ENCODE measurements at regions of chr14 and their contacts with region 1.

Region 1: GRCh38 chr14:49867831-49868723 is 15.5 kb upstream of the NEMF start:
- DNase-seq: peak; percentile 86 to 97 (median 89)
- H3K4me3 ChIP-seq: peak overlapping the region; percentile 27 to 87 (median 76)
- H3K27ac ChIP-seq: peak overlapping the region in 58 of 59 donors; percentile 45 to 96 (median 87)
- H3K27me3 ChIP-seq: no peaks in the 10 kb centered on the region
- CTCF ChIP-seq: peak in 26 of 56 donors; percentile 6 to 50 (median 22)

Region 2: DNA sequence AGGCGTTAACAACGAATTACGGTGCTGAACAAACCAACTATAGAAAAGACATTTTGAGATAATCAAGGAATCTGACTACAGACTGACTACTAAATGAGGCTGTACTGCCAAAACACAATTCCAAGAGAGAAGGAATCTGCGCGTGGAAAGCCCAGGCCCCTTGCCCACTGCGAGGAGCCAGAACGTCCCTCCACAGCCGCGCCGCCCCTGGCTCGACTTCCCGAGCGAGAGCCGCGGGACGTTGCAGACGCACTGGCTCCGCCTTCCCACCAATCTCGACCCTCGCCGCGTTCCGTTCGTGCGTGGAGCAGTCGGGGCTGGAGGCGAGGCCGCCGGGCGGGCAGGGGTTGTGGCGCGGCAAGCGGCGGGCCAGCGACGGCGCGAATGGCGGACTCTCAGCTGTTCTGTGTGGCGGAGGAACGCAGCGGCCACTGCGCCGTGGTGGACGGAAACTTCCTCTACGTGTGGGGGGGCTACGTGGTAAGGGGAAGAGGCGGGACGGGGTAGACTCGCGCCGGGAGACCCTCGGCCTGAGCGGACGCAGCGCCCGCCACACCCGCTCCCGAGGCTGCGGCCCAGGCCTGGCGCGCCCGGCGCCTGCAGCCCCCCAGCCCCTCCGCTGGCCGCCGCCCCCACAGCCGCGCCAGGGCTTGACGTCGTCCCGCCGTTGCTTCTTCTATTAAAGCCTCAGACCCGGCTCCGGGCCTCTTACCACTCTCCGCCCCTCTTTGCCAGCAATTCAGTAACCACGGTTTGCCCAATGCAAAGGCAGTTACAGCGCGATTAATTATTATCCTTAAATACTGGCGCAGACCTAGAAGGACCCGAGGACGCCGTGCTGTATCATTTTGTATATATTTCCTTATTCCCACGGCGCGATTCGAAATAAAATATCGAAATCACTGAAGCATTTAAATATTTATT is 175.0 kb before region 1 on chr14 and contains the start of gene KLHDC1:
- intact Hi-C with region 1: loop called in 1 of 2 experiments (anchors 10 kb)
- DNase-seq: peak; percentile 71 to 93 (median 86)
- H3K4me3 ChIP-seq: peak within 1 kb of the TSS; percentile 49 to 94 (median 78)
- H3K27ac ChIP-seq: peak within 1 kb of the TSS; percentile 74 to 99 (median 93)
- H3K27me3 ChIP-seq: no peaks in the 10 kb centered on the region
- CTCF ChIP-seq: peak in 25 of 56 donors; percentile 9 to 41 (median 26)
- total RNA-seq, gene KLHDC1: 14.3 to 47.1 (median 25.4) TPM

Region 3: DNA sequence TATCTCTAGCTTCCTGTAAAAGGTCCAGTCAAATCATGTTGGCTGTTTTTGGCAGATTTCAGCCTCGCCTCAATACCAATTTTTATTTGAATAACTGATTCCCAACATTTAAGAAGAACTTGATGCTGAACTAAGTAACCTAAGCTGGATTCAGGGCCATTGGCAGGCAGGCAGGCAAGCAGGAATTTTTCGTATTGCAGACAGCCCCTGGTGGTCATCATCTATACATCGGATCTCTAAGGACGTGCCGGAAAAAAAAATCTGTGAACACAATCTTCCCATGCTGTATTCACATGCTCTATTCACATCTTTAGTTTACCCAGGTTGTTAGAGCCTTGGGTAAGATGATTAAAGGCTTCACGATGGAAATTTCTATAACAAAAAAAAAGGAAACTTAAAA is 241.3 kb after region 1 on chr14:
- intact Hi-C with region 1: loop called in 1 of 2 experiments (anchors 5 kb)
- DNase-seq: no peak
- H3K4me3 ChIP-seq: no peak overlapping the region
- H3K27ac ChIP-seq: peak overlapping the region in 1 of 59 donors; percentile 23
- H3K27me3 ChIP-seq: no peaks in the 10 kb centered on the region
- CTCF ChIP-seq: peak in 7 of 56 donors; percentile 6 to 29 (median 16)

Region 4: GRCh38 chr14:50311975-50312733 is 444.1 kb after region 1 on chr14 and contains the starts of genes DMAC2L and L2HGDH:
- intact Hi-C with region 1: loop called in 1 of 2 experiments (anchors 10 kb)
- DNase-seq: peak; percentile 89 to 97 (median 94)
- H3K4me3 ChIP-seq: peak within 1 kb of the TSS; percentile 65 to 100 (median 91)
- H3K27ac ChIP-seq: peak within 1 kb of the TSS; percentile 58 to 96 (median 93)
- H3K27me3 ChIP-seq: no peaks in the 10 kb centered on the region
- CTCF ChIP-seq: peak in 40 of 56 donors; percentile 1 to 55 (median 32)
- total RNA-seq, gene DMAC2L: 12.3 to 38.0 (median 23.5) TPM
- total RNA-seq, gene L2HGDH: 8.9 to 22.1 (median 15.0) TPM

Measured in dorsolateral prefrontal cortex (tissue), 120 donors.